HEK293 (cell line): ENCODE measurements at regions of chr2 and their contacts with region 1.

Region 1: DNA sequence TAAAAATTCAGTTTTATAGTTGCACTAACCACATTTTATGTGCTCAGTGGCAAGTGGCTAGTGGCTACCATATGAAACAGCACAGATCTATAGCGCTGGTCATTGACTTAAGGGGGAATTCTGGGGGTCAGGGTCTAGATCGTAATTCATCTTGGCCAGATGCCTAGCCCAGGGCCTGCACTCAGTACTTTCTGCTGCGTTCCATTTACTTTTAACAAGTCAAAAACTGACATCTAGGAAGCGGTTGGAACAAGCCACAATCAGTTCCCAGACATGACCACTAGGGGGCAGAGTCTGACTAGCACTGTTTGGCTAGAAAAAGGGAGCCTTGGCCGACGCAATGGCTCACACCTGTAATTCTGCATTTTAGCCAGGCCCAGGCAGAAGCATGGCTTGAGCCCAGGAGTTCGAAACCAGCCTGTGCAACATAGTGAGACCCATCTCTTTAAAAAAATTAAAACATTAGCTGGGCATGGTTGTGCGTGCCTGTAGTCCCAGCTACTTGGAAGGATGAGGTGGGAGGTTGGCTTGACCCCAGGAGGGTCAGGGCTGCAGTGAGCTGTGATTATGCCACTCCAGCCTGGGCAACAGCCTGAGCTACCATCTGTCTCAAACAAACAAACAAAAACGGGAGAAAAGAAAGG is 9.0 kb upstream of the TMBIM1 start:
- H3K4me3 ChIP-seq: no peak overlapping the region
- H3K27ac ChIP-seq: no peak overlapping the region
- H3K4me1 ChIP-seq: no peaks in the 10 kb centered on the region; the same call in 1 of the 2 replicates
- CTCF ChIP-seq: peak; percentile 94

Region 2: DNA sequence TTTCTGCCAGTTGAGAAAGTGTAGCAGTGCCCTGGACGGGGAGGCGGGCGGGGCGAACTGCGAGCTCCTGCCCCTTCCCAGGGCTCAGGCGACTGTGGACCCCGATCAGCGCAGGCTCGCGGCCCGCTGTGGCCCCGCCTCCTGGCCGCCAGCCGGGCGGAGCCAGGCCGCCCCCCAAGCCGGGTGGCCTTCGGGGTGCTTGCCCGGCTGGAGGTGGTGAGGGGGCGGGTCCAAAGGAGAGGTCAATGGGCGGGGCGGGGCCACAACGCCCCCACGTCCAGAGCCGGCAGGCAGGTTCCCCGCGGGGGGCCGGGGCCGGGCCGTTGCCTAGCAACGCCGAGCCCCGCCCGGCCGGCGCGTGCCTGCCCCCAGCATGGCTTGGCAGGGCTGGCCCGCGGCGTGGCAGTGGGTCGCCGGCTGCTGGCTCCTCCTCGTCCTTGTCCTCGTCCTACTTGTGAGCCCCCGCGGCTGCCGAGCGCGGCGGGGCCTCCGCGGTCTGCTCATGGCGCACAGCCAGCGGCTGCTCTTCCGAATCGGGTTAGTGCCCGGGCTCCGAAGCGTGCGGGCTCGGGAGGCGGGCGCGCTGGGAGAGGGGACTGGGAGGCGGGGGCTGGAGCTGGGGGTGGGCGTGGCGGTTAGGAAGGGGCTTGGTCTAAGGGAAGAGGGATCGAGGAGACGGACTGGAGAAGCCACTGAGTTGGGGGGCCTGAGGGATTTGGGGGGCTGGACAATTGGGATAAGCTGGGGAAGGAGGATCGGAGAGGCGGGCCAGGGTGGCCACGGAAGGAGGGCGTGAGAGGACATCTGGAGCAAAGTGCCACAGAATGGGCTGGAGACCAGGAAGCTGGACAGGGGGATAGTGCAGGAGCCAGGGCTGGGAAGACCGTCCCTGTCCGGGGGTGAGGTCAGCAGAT is 21.9 kb after region 1 on chr2:
- CTCF ChIA-PET with region 1: interaction called, 13 read pairs
- POLR2A ChIA-PET with region 1: no interaction called
- H3K4me3 ChIP-seq: peak overlapping the region; percentile 56
- H3K27ac ChIP-seq: peak overlapping the region; percentile 63; the same call in 1 of the 2 replicates
- H3K4me1 ChIP-seq: peaks cover 7% of the 10 kb centered on the region
- CTCF ChIP-seq: peak; percentile 44

Region 3: GRCh38 chr2:218339806-218340205 is 38.5 kb after region 1 on chr2:
- CTCF ChIA-PET with region 1: no interaction called
- POLR2A ChIA-PET with region 1: no interaction called
- H3K4me3 ChIP-seq: no peak overlapping the region
- H3K27ac ChIP-seq: no peak overlapping the region
- H3K4me1 ChIP-seq: no peaks in the 10 kb centered on the region
- CTCF ChIP-seq: no peak

Region 4: DNA sequence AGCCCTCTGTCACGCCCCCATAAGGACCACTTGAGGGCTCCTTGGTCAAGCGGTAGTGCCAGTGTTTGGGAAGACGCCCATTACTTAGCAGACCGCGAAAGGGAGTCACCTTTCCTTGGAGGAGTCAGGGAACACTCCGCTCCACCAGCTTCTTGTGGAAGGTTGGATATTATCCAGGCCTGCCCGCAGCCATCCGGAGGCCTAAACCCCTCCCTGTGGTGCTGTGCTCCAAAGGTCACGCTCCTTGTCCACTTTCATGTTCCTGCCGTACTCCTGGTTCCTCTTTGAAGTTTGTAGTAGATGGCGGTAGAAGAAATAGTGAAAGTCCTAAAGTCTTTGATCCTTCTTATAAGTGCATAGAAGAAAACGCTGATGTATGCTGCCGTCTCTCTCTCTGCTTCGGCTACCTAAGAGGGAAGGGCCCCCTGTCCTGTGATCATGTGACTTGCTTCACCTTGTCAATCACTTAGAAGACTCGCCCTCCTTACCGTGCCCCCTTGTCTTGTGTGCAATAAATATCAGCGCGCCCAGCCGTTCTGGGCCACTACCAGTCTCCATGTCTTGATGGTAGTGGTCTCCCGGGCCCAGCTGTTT is 53.6 kb after region 1 on chr2:
- CTCF ChIA-PET with region 1: interaction called, 12 read pairs
- POLR2A ChIA-PET with region 1: no interaction called
- H3K4me3 ChIP-seq: no peak overlapping the region
- H3K27ac ChIP-seq: no peak overlapping the region
- H3K4me1 ChIP-seq: no peaks in the 10 kb centered on the region
- CTCF ChIP-seq: no peak

Region 5: DNA sequence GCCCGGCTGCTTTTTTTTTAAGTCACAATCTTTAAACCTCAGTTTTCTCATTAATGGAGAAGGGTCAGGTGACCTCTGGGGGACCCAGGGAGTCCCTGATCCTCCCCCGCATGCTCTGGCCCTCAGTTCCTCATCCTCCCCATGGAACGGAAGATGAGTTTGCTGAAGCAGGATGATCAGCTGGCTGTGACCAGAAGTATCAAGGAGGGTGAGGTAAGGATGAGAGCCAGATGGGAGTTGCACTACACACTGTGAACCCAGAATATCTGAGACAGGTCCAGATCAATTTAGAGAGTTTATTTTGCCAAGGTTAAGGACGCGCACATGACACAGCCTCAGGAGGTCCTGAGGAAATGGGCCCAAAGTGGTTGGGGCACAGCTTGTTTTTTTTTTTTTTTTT is 59.1 kb after region 1 on chr2:
- CTCF ChIA-PET with region 1: interaction called, 12 read pairs
- POLR2A ChIA-PET with region 1: no interaction called
- H3K4me3 ChIP-seq: no peak overlapping the region
- H3K27ac ChIP-seq: no peak overlapping the region
- H3K4me1 ChIP-seq: no peaks in the 10 kb centered on the region
- CTCF ChIP-seq: no peak

Region 6: GRCh38 chr2:218395797-218396687 is 94.7 kb after region 1 on chr2:
- CTCF ChIA-PET with region 1: interaction called, 20 read pairs
- POLR2A ChIA-PET with region 1: interaction called, 7 read pairs
- H3K4me3 ChIP-seq: peak overlapping the region; percentile 74
- H3K27ac ChIP-seq: peak overlapping the region; percentile 93
- H3K4me1 ChIP-seq: peaks cover 15% of the 10 kb centered on the region
- CTCF ChIP-seq: peak; percentile 96